Left ventricle myocardium inferior (tissue), 1 donor: ENCODE measurements at regions of chr16 and their contacts with region 1.

Region 1: DNA sequence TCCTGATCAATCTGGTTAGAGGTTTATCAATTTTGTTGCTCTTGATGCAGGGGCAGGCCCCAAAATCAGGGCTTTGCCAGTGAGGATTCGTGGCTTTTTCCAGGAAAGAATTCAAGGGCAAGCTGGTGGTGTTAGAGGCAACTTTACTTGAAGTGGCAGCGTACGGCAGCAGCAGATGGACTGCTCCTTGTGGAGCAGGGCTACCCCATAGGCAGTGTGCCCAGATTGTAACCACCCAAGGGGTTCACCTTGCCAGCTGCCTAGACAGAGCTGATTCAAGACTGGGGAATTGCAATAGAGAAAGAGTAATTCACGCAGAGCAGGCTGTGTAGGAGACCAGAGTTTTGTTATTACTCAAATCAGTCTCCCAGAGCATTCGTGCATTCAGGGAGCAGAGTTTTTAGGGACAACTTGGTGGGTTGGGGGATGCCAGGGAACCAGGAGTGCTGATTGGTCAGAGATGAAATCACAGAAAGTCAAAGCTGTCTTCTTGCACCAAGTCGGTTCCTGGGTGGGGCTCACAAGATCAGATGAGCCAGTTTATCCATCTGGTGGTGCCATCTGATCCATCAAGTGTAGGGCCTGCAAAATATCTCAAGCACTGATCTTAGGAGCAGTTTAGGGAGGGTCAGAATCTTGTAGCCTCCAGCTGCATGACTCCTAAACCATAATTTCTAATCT is 16.9 kb downstream of the DRC7 start:
- DNase-seq: no peak
- H3K4me3 ChIP-seq: no peak overlapping the region
- H3K27ac ChIP-seq: no peak overlapping the region
- H3K4me1 ChIP-seq: no peaks in the 10 kb centered on the region
- H3K27me3 ChIP-seq: peaks cover 5% of the 10 kb centered on the region
- CTCF ChIP-seq: no peak

Region 2: GRCh38 chr16:57591086-57591869 is 120.2 kb before region 1 on chr16:
- intact Hi-C with region 1: loop called (anchors 10 kb)
- DNase-seq: peak; percentile 68
- H3K4me3 ChIP-seq: no peak overlapping the region
- H3K27ac ChIP-seq: no peak overlapping the region
- H3K4me1 ChIP-seq: peaks cover 11% of the 10 kb centered on the region
- H3K27me3 ChIP-seq: peaks cover 12% of the 10 kb centered on the region
- CTCF ChIP-seq: peak; percentile 92

Region 3: DNA sequence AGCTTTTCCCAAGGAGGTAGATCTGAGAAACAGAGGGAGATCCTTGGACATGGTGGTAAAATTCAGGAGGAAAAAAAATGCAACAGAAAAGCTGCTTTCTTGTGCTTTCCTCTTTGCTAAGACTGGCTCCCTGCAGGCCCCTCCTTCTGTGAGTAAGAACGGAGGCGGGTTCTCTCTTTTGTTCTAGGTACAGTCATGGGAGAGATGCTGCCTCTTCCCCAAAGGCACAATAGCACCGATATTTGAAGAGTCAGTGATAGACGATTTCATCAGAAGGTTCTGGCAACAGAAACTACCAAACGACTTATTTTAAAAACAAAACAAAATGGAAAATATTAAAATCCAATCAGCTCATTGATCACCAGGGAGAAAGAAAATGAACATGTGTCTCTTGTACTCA is 123.5 kb after region 1 on chr16:
- intact Hi-C with region 1: no loop called
- DNase-seq: no peak
- H3K4me3 ChIP-seq: no peak overlapping the region
- H3K27ac ChIP-seq: no peak overlapping the region
- H3K4me1 ChIP-seq: peaks cover 4% of the 10 kb centered on the region
- H3K27me3 ChIP-seq: no peaks in the 10 kb centered on the region
- CTCF ChIP-seq: no peak